H1 (cell line): ENCODE measurements at regions of chr17 and their contacts with region 1.

Region 1: GRCh38 chr17:18332909-18333489 is 17.9 kb downstream of the SMCR8 start:
- DNase-seq: no peak
- H3K4me3 ChIP-seq: no peak overlapping the region
- H3K27ac ChIP-seq: no peak overlapping the region
- H3K4me1 ChIP-seq: no peaks in the 10 kb centered on the region
- H3K27me3 ChIP-seq: no peaks in the 10 kb centered on the region
- CTCF ChIP-seq: no peak
- EP300 ChIP-seq: no peak
- POLR2A ChIP-seq: no peak
- RAD21 ChIP-seq: no peak

Region 2: GRCh38 chr17:18344021-18344420 is 11.0 kb after region 1 on chr17:
- CTCF ChIA-PET with region 1: interaction called, 6 read pairs
- POLR2A ChIA-PET with region 1: interaction called, 37 read pairs
- DNase-seq: no peak
- H3K4me3 ChIP-seq: no peak overlapping the region
- H3K27ac ChIP-seq: no peak overlapping the region
- H3K4me1 ChIP-seq: no peaks in the 10 kb centered on the region
- H3K27me3 ChIP-seq: no peaks in the 10 kb centered on the region
- CTCF ChIP-seq: no peak
- EP300 ChIP-seq: no peak
- POLR2A ChIP-seq: no peak
- RAD21 ChIP-seq: no peak